ENCODE measurements at regions of chr1 and their contacts with region 1.

Region 1: GRCh38 chr1:8848663-8849386 is 29.7 kb downstream of the ENO1 start:
- DNase-seq: peak; percentile 82
- ATAC-seq: peak; percentile 92
- H3K4me3 ChIP-seq: no peak overlapping the region
- H3K4me3 Mint-ChIP-seq: no peak overlapping the region
- H3K27ac ChIP-seq: no peak overlapping the region
- H3K27ac Mint-ChIP-seq: no peak overlapping the region
- H3K4me1 ChIP-seq: peaks cover 2 to 5% of the 10 kb centered on the region in 2 donors
- H3K4me1 Mint-ChIP-seq: peaks cover 2% of the 10 kb centered on the region
- H3K27me3 ChIP-seq: no peaks in the 10 kb centered on the region
- H3K27me3 Mint-ChIP-seq: peaks cover 7% of the 10 kb centered on the region
- CTCF ChIP-seq: peak; percentile 92

Region 2: DNA sequence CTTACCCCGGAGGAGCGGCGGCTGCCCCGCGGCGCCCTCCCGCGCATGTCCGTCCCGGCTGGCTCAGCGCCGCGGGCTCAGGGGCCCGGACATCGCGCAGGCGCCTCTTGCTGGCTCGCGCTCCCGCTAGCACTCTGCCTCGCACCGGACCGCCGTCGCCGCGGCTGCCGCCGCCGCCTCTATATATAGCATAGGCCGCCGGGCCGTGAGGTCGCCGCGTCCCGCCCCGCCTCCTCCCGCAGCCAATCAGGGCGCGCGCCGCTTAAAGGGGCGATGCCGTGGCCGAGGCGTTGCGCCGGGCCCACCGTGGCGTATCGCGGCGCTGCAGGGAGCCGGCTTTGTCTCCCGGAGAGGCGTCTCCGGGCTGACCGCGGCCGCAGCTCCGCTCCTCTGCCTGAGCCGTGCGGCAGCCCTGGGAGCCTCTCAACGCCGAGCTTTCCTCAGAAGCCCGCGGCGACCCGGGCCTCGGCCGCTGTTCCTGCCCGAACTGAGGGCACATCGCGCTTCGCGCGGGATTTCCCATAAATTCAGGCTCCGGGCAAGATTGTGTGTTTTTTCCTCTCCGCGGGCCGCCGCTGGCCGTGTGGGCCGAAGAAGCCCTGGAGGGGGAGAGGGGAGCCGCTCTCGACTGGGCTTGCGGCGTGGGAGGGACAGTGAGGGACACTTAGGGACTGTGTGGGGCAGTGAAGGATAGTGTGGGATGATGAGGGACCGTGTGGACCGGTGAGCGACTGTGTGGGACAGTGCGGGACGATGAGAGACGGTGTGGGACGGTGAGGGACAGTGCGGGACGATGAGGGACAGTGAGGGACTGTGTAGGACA is 822.5 kb before region 1 on chr1 and contains the start of gene ERRFI1:
- CTCF ChIA-PET with region 1: interaction called, 11 read pairs
- POLR2A ChIA-PET with region 1: no interaction called
- intact Hi-C with region 1: no loop called
- DNase-seq: peak; percentile 92
- ATAC-seq: peak; percentile 91
- H3K4me3 ChIP-seq: peak within 1 kb of the TSS in 4 of 5 experiments; percentile 48 to 68 (median 56)
- H3K4me3 Mint-ChIP-seq: peak within 1 kb of the TSS; percentile 90
- H3K27ac ChIP-seq: no peak within 1 kb of the TSS
- H3K27ac Mint-ChIP-seq: peak within 1 kb of the TSS; percentile 72
- H3K4me1 ChIP-seq: peaks cover 11 to 16% of the 10 kb centered on the region in 2 donors
- H3K4me1 Mint-ChIP-seq: peaks cover 10% of the 10 kb centered on the region
- H3K27me3 ChIP-seq: peaks cover 5 to 25% (median 15%) of the 10 kb centered on the region in 4 experiments
- H3K27me3 Mint-ChIP-seq: peaks cover 24% of the 10 kb centered on the region
- CTCF ChIP-seq: no peak
- total RNA-seq, gene ERRFI1: 1.5 and 2.0 TPM in 2 replicates

Region 3: GRCh38 chr1:8554956-8555534 is 293.8 kb before region 1 on chr1:
- CTCF ChIA-PET with region 1: interaction called, 99 read pairs
- POLR2A ChIA-PET with region 1: no interaction called
- intact Hi-C with region 1: no loop called
- DNase-seq: no peak
- ATAC-seq: no peak
- H3K4me3 ChIP-seq: no peak overlapping the region
- H3K4me3 Mint-ChIP-seq: no peak overlapping the region
- H3K27ac ChIP-seq: no peak overlapping the region
- H3K27ac Mint-ChIP-seq: peak overlapping the region; percentile 16
- H3K4me1 ChIP-seq: peaks cover 0 to under 1% of the 10 kb centered on the region in 2 donors
- H3K4me1 Mint-ChIP-seq: peaks cover 17% of the 10 kb centered on the region
- H3K27me3 ChIP-seq: no peaks in the 10 kb centered on the region
- H3K27me3 Mint-ChIP-seq: no peaks in the 10 kb centered on the region
- CTCF ChIP-seq: no peak

Region 4: DNA sequence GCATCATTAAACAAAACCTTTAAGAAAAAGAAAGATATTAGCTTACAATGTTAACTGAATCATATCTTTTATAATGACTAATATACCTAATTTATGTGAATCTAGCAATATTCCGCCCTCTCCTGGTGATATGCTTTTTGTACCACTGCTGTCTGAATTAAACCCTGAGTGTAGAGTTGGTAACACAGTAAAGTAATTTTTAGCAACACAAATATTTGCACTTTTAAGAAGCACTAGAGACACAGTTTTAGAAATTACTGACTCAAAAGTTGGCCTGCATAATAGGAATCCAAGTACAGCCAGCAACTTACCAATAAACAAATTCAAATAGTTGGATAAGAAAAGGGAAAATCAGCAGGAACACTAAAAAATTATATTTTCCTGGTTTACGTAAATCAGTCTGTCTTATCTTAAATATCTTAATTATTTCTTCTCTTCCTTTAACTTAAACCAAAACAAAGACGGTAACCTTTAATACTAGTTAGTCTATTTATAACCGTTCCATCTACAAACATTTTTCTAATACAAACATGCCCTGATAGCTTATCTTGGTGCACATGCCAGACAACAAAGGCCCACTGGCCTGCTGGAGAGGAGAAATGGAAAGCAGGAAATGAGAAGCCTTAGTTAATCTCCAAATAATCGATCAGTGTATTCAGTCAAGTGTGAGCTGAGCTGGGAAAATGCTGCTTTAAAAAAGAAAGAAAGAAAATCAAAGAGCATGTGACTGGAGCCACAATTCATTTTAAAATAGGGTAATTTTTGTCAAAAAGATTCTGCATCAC is 277.4 kb before region 1 on chr1:
- CTCF ChIA-PET with region 1: interaction called, 15 read pairs
- POLR2A ChIA-PET with region 1: no interaction called
- intact Hi-C with region 1: no loop called
- DNase-seq: peak; percentile 20
- ATAC-seq: no peak
- H3K4me3 ChIP-seq: no peak overlapping the region
- H3K4me3 Mint-ChIP-seq: no peak overlapping the region
- H3K27ac ChIP-seq: no peak overlapping the region
- H3K27ac Mint-ChIP-seq: no peak overlapping the region
- H3K4me1 ChIP-seq: peaks cover 0 to 7% of the 10 kb centered on the region in 2 donors
- H3K4me1 Mint-ChIP-seq: peaks cover 13% of the 10 kb centered on the region
- H3K27me3 ChIP-seq: no peaks in the 10 kb centered on the region
- H3K27me3 Mint-ChIP-seq: no peaks in the 10 kb centered on the region
- CTCF ChIP-seq: peak; percentile 38

Region 5: GRCh38 chr1:8718850-8719361 is 129.9 kb before region 1 on chr1:
- CTCF ChIA-PET with region 1: interaction called, 106 read pairs
- POLR2A ChIA-PET with region 1: no interaction called
- intact Hi-C with region 1: no loop called
- DNase-seq: no peak
- ATAC-seq: no peak
- H3K4me3 ChIP-seq: no peak overlapping the region
- H3K4me3 Mint-ChIP-seq: no peak overlapping the region
- H3K27ac ChIP-seq: no peak overlapping the region
- H3K27ac Mint-ChIP-seq: peak overlapping the region; percentile 17
- H3K4me1 ChIP-seq: peaks cover 26 to 40% of the 10 kb centered on the region in 2 donors
- H3K4me1 Mint-ChIP-seq: peaks cover 59% of the 10 kb centered on the region
- H3K27me3 ChIP-seq: no peaks in the 10 kb centered on the region
- H3K27me3 Mint-ChIP-seq: no peaks in the 10 kb centered on the region
- CTCF ChIP-seq: no peak

Region 6: GRCh38 chr1:8780405-8780804 is 68.4 kb before region 1 on chr1:
- CTCF ChIA-PET with region 1: no interaction called
- POLR2A ChIA-PET with region 1: no interaction called
- intact Hi-C with region 1: no loop called
- DNase-seq: no peak
- ATAC-seq: no peak
- H3K4me3 ChIP-seq: no peak overlapping the region
- H3K4me3 Mint-ChIP-seq: no peak overlapping the region
- H3K27ac ChIP-seq: no peak overlapping the region
- H3K27ac Mint-ChIP-seq: no peak overlapping the region
- H3K4me1 ChIP-seq: peaks cover 3 to 13% of the 10 kb centered on the region in 2 donors
- H3K4me1 Mint-ChIP-seq: peaks cover 28% of the 10 kb centered on the region
- H3K27me3 ChIP-seq: no peaks in the 10 kb centered on the region
- H3K27me3 Mint-ChIP-seq: no peaks in the 10 kb centered on the region
- CTCF ChIP-seq: no peak

Region 7: GRCh38 chr1:8817406-8818324 is 31.2 kb before region 1 on chr1 and contains the start of gene RERE:
- CTCF ChIA-PET with region 1: interaction called, 18 read pairs
- POLR2A ChIA-PET with region 1: no interaction called
- intact Hi-C with region 1: no loop called
- DNase-seq: peak; percentile 97
- ATAC-seq: peak; percentile 94
- H3K4me3 ChIP-seq: peak within 1 kb of the TSS; percentile 74 to 99 (median 95)
- H3K4me3 Mint-ChIP-seq: peak within 1 kb of the TSS; percentile 89
- H3K27ac ChIP-seq: peak within 1 kb of the TSS; percentile 85 to 95
- H3K27ac Mint-ChIP-seq: peak within 1 kb of the TSS; percentile 90
- H3K4me1 ChIP-seq: peaks cover 23 to 25% of the 10 kb centered on the region in 2 donors
- H3K4me1 Mint-ChIP-seq: peaks cover 40% of the 10 kb centered on the region
- H3K27me3 ChIP-seq: no peaks in the 10 kb centered on the region
- H3K27me3 Mint-ChIP-seq: peaks cover 5% of the 10 kb centered on the region
- CTCF ChIP-seq: no peak
- total RNA-seq, gene RERE: 132 and 146 TPM in 2 replicates

Measured in B cell (primary cell).